ENCODE measurements at regions of chr15 and their contacts with region 1.

Region 1: GRCh38 chr15:34241372-34242330 is 16.8 kb downstream of the EMC4 start:
- DNase-seq: peak; percentile 58 to 75
- ATAC-seq: peak; percentile 65 to 90; a peak in 3 of 6 replicates
- H3K4me3 ChIP-seq: no peak overlapping the region
- H3K27ac ChIP-seq: no peak overlapping the region
- H3K4me1 ChIP-seq: peaks cover 17% of the 10 kb centered on the region; the same call in 2 of the 3 replicates
- CTCF ChIP-seq: peak; percentile 67
- EP300 ChIP-seq: no peak
- POLR2A ChIP-seq: no peak
- RAD21 ChIP-seq: peak; percentile 62 to 66

Region 2: GRCh38 chr15:33941279-33942063 is 300.2 kb before region 1 on chr15:
- CTCF ChIA-PET with region 1: no interaction called
- POLR2A ChIA-PET with region 1: no interaction called
- DNase-seq: no peak
- ATAC-seq: no peak
- H3K4me3 ChIP-seq: no peak overlapping the region
- H3K27ac ChIP-seq: no peak overlapping the region
- H3K4me1 ChIP-seq: no peaks in the 10 kb centered on the region
- CTCF ChIP-seq: no peak
- EP300 ChIP-seq: no peak
- POLR2A ChIP-seq: no peak
- RAD21 ChIP-seq: no peak

Region 3: DNA sequence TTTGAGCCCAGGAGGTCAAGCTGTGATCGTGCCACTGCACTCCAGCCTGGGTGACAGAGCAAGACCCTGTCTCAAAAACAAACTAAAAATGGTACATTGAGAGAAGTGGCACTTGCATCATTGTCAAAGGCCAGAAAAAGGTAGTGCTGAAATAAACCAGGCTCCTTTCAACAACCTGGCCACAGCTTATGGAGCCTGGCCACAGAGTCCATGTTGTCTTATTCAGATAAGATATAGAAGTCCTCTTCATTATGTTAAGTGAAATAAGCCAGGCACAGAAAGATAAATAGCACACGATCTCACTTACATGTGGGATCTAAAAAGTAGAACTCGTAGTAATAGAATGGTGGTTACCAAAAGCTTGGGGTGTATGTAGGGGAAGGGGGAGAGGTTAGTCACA is 17.9 kb after region 1 on chr15:
- CTCF ChIA-PET with region 1: interaction called, 13 read pairs
- POLR2A ChIA-PET with region 1: no interaction called
- DNase-seq: no peak
- ATAC-seq: no peak
- H3K4me3 ChIP-seq: no peak overlapping the region
- H3K27ac ChIP-seq: no peak overlapping the region
- H3K4me1 ChIP-seq: no peaks in the 10 kb centered on the region
- CTCF ChIP-seq: no peak
- EP300 ChIP-seq: no peak
- POLR2A ChIP-seq: no peak
- RAD21 ChIP-seq: no peak

Region 4: GRCh38 chr15:34271493-34271892 is 29.8 kb after region 1 on chr15:
- CTCF ChIA-PET with region 1: interaction called, 10 read pairs
- POLR2A ChIA-PET with region 1: no interaction called
- DNase-seq: peak in 1 of 2 experiments; percentile 52
- ATAC-seq: peak; percentile 42 to 73; a peak in 2 of 6 replicates
- H3K4me3 ChIP-seq: no peak overlapping the region
- H3K27ac ChIP-seq: peak overlapping the region in 1 of 2 experiments; percentile 18; a peak in 1 of 6 replicates
- H3K4me1 ChIP-seq: peaks cover 35% of the 10 kb centered on the region
- CTCF ChIP-seq: no peak
- EP300 ChIP-seq: no peak
- POLR2A ChIP-seq: no peak
- RAD21 ChIP-seq: no peak

Region 5: GRCh38 chr15:34327906-34328305 is 86.3 kb after region 1 on chr15:
- CTCF ChIA-PET with region 1: interaction called, 15 read pairs
- POLR2A ChIA-PET with region 1: no interaction called
- DNase-seq: no peak
- ATAC-seq: no peak
- H3K4me3 ChIP-seq: no peak overlapping the region
- H3K27ac ChIP-seq: no peak overlapping the region
- H3K4me1 ChIP-seq: no peaks in the 10 kb centered on the region
- CTCF ChIP-seq: no peak
- EP300 ChIP-seq: no peak
- POLR2A ChIP-seq: no peak
- RAD21 ChIP-seq: no peak

Region 6: DNA sequence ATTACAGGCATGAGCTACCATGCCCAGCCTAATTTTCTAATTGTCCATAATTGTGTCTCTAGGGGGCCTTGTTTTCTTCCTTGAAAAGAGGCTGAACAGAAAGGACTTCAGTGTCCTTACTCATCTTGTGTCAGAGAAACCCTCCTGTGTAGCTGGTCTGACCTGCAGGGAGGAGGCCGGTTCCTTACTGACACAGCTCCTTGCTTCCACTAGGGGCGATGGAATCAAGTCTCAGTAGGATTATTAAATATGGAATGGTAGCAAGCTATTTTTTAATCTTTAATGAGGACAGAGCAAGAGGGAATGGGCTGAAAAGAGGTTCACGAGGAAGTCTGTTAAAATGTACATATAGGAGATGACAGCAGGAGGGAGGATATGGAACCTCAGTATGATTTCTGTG is 116.7 kb after region 1 on chr15:
- CTCF ChIA-PET with region 1: interaction called, 12 read pairs
- POLR2A ChIA-PET with region 1: no interaction called
- DNase-seq: peak; percentile 56 to 82
- ATAC-seq: peak; percentile 76 to 88; a peak in 5 of 6 replicates
- H3K4me3 ChIP-seq: no peak overlapping the region
- H3K27ac ChIP-seq: no peak overlapping the region
- H3K4me1 ChIP-seq: peaks cover 8% of the 10 kb centered on the region; the same call in 2 of the 3 replicates
- CTCF ChIP-seq: peak; percentile 35; the same call in 1 of the 3 replicates
- EP300 ChIP-seq: no peak
- POLR2A ChIP-seq: no peak
- RAD21 ChIP-seq: 0 out of 5 replicates have a peak, but pooled peaks of 1 of the 2 experiments have one; percentile 15

Measured in A549 (cell line).